ENCODE measurements at regions of chr10 and their contacts with region 1.

Region 1: DNA sequence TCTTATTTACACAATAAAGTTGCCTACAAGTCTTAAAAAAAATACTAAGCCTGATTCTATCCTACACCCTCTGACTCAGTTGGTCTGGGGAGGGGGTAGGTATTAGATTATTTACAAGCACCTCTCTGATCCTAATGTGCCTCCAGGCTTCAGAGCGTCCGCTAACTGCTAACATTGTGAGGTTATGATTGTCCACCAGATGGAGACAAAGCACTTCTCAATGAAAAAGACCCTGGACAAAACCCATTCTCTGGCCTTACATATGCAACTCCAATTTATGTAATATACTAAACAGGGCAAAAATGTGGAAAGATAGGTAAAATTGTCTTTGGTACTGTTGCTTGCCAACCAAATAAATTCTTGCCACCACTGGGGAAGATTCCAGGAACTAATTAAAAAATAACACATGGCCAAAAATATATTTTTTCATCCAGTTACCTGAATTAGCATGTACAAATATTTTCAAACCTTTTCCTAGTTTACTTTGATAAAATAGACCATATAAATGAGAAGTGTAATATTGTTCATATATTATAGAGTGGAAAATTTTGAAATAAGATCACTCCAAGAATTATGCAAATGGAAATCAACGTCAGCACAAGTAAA is 92.4 kb downstream of the KIF20B start:
- DNase-seq: peak; percentile 72
- H3K4me3 ChIP-seq: no peak overlapping the region
- H3K27ac ChIP-seq: no peak overlapping the region
- H3K4me1 ChIP-seq: no peaks in the 10 kb centered on the region
- CTCF ChIP-seq: peak; percentile 94

Region 2: DNA sequence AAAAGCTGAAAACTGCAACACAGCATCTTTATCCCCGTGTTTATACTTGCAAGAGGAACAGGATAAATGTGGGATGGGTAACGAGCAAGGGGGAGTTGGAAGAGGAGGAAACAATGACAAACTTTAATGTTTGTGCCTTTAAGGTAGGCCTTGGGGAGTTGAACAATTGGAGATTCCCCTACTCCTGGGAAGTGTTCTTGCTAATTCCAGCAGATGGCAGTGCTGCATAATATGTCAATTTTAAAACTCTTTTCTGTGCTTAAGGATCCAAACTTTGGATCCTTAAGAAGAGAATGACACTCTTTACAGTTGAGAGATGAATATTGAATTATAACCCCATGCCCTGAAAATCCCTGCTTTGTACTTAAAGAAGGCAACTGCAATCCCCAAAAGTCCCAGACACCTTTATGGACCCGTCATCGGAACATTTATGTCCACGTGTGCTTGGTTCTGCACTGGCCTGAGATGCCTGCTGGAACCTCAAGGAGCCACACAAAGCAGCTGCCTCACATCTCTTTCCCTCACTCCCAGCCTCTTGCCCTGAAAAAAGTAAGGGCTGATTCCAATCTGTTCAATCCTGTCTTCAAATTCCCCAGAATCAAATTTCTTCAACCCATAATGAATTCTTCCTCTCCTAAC is 367.4 kb before region 1 on chr10:
- CTCF ChIA-PET with region 1: no interaction called
- POLR2A ChIA-PET with region 1: no interaction called
- intact Hi-C with region 1: loop called (anchors 5 kb)
- DNase-seq: peak; percentile 51
- H3K4me3 ChIP-seq: no peak overlapping the region
- H3K27ac ChIP-seq: no peak overlapping the region
- H3K4me1 ChIP-seq: no peaks in the 10 kb centered on the region
- CTCF ChIP-seq: peak; percentile 80

Region 3: GRCh38 chr10:89783406-89783805 is 10.3 kb before region 1 on chr10:
- CTCF ChIA-PET with region 1: no interaction called
- POLR2A ChIA-PET with region 1: no interaction called
- intact Hi-C with region 1: no loop called
- DNase-seq: no peak
- H3K4me3 ChIP-seq: no peak overlapping the region
- H3K27ac ChIP-seq: no peak overlapping the region
- H3K4me1 ChIP-seq: no peaks in the 10 kb centered on the region
- CTCF ChIP-seq: no peak

Region 4: DNA sequence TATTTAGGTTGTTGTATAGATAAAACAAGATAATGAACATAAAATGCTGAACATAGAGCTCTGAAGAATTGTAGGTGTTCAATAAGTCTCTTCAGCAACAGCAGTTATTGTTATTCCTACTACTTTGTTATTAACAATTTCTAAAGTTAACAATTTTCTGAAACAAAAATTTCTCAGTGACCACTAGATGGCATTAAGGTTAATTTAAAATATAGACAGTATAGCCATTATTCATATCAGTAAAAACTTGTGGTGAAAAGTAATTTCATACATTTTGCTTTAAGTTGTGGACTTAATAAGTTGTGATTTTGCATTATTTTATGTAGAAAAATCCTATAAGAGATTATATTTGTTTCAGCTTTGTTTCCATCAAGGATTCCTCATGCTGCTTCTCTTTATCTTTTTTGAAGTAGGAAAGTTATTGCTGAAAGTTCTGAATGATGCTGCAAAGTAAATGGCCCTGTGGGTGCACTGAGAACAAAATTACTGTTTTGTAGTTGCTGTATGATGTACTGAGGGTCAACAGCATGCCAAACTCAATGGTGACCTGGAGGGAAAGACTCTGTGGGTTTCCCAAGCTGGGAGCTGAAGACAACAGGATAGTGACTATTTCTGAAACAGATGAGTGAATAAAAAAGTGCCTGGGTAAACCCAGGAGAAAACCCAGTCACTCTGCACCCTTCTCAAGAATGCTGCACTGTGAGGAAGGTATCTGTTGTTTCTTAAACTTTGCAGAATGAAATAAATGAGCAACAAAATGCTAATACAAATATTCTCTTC is 161.2 kb after region 1 on chr10:
- CTCF ChIA-PET with region 1: no interaction called
- POLR2A ChIA-PET with region 1: no interaction called
- intact Hi-C with region 1: loop called (anchors 5 kb)
- DNase-seq: peak; percentile 10
- H3K4me3 ChIP-seq: no peak overlapping the region
- H3K27ac ChIP-seq: no peak overlapping the region
- H3K4me1 ChIP-seq: no peaks in the 10 kb centered on the region
- CTCF ChIP-seq: peak; percentile 87

Region 5: DNA sequence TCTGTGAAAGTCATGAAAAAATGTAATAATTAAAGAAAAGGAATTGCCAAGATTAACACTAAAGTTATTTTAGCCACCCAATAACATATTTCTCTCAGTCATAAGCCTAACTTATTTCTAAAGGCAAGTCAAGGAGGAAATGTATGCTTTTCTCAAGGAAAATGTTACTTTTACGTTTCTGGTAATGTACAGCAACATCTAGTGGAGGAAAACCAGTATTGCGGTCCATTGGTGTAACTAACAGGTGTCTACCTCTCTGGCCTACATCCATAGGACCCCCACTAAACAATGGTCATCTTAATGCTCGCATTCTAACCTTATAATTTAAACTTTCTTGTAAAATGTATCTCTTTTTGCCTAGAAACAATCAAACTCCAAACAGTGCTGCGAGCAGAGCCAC is 345.1 kb after region 1 on chr10:
- CTCF ChIA-PET with region 1: no interaction called
- POLR2A ChIA-PET with region 1: no interaction called
- intact Hi-C with region 1: loop called (anchors 1 kb)
- DNase-seq: peak; percentile 47
- H3K4me3 ChIP-seq: no peak overlapping the region
- H3K27ac ChIP-seq: no peak overlapping the region
- H3K4me1 ChIP-seq: no peaks in the 10 kb centered on the region
- CTCF ChIP-seq: peak; percentile 78

Region 6: GRCh38 chr10:90592638-90593302 is 799.0 kb after region 1 on chr10:
- CTCF ChIA-PET with region 1: no interaction called
- POLR2A ChIA-PET with region 1: no interaction called
- intact Hi-C with region 1: loop called (anchors 10 kb)
- DNase-seq: peak; percentile 28
- H3K4me3 ChIP-seq: no peak overlapping the region
- H3K27ac ChIP-seq: no peak overlapping the region
- H3K4me1 ChIP-seq: no peaks in the 10 kb centered on the region
- CTCF ChIP-seq: peak; percentile 57

Measured in OCI-LY7 (cell line).